PC-3 (cell line): ENCODE measurements at regions of chr1 and their contacts with region 1.

Region 1: DNA sequence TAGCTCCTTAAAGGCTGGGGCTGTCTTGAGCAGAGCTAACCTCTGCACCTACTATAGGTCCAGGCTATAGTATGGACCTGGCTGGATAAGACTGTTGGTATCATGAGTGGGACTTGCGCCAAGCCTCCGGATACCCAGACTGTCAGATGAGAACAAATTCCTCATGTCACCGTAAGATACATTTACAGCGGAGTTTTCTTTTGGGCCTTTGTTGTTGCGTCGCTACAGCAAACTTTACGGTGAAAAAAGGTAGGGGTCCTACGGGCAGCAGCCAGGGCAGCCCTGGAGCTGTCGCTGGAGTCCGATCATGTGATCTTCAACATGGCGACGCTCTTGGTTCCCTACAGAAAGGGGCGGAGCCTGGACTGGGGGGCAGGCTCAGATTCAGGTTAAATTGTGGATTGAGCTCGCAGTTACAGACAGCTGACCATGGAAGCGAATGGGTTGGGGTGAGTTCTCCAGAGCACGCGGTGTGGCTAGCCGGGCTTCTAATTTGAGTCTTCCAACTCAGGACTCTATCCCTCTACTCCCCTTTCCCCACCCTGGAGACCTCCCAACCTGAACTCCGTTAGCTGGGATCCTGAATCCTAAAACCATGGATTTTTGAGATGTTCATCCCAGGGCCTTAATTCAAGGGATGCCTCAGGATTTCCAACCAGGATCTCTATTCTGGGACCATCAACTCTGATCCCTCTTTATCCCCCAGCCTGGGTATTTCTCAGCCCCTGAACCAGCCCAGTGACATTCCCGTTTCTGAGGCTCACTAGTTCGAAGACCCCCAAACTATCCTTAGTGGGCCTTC is at the start of gene UROD:
- DNase-seq: peak; percentile 96
- ATAC-seq: peak; percentile 69
- H3K4me3 ChIP-seq: peak within 1 kb of the TSS; percentile 93
- H3K27ac ChIP-seq: peak within 1 kb of the TSS; percentile 37
- H3K4me1 ChIP-seq: peaks cover 22% of the 10 kb centered on the region
- H3K27me3 ChIP-seq: no peaks in the 10 kb centered on the region
- CTCF ChIP-seq: no peak
- total RNA-seq, gene UROD: 167 and 168 TPM in 2 replicates

Region 2: DNA sequence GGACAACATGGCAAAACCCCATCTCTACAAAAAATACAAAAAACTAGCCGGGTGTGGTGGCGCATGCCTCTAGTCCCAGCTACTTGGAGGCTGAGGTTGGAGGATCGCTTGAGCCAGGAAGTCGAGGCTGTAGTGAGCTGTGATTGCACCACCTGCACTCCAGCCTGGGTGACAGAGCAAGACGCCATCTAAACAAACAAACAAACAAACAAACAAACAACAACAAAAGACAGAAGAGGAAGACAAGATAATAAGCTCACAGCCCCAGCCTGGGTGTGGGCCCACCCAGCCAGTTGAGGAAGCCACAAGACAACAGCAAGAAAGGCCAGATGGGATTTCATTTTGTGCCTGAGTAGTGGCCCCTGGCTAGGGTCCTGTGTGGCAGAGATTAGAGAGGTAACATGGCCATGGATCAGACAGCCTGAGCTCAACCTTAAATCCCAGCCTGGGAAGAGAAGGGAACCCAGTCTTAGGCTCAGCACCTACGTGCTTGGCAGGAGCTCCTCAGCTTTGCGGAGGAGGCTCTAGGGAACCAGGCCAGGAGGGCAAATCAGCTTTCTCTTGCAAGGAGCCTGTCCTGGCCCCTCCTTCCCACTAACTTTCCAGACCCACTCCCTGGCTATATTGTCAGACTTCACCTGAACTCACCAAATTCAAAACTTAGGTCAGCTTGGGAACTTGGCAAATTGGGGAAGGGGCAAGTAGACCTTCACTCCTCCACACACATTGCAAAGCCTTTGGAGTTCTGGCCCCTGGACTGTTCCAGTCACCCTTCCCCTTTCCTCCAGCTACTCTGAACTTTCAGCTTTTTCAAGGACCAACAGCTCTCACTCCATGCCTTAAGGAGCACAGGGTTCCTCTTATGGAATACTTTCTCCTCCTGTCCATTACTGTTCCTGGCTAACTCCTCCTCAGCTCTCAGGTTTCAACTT is 219.0 kb before region 1 on chr1:
- CTCF ChIA-PET with region 1: interaction called, 6 read pairs
- POLR2A ChIA-PET with region 1: no interaction called
- intact Hi-C with region 1: loop called (anchors 5 kb)
- DNase-seq: no peak
- ATAC-seq: no peak
- H3K4me3 ChIP-seq: no peak overlapping the region
- H3K27ac ChIP-seq: no peak overlapping the region
- H3K4me1 ChIP-seq: no peaks in the 10 kb centered on the region
- H3K27me3 ChIP-seq: no peaks in the 10 kb centered on the region
- CTCF ChIP-seq: no peak

Region 3: GRCh38 chr1:44907893-44908292 is 104.1 kb before region 1 on chr1:
- CTCF ChIA-PET with region 1: no interaction called
- POLR2A ChIA-PET with region 1: no interaction called
- intact Hi-C with region 1: loop called (anchors 2 kb)
- DNase-seq: no peak
- ATAC-seq: peak; percentile 22; the same call in 1 of the 2 replicates
- H3K4me3 ChIP-seq: no peak overlapping the region
- H3K27ac ChIP-seq: no peak overlapping the region
- H3K4me1 ChIP-seq: no peaks in the 10 kb centered on the region
- H3K27me3 ChIP-seq: no peaks in the 10 kb centered on the region
- CTCF ChIP-seq: no peak

Region 4: GRCh38 chr1:44985747-44986359 is 26.2 kb before region 1 on chr1:
- CTCF ChIA-PET with region 1: no interaction called
- POLR2A ChIA-PET with region 1: interaction called, 15 read pairs
- intact Hi-C with region 1: loop called (anchors 1 kb)
- DNase-seq: no peak
- ATAC-seq: peak; percentile 19
- H3K4me3 ChIP-seq: peak overlapping the region; percentile 82
- H3K27ac ChIP-seq: 0 out of 2 replicates have a peak overlapping the region, but pooled peaks have one; percentile 5
- H3K4me1 ChIP-seq: peaks cover 3% of the 10 kb centered on the region; the same call in 1 of the 2 replicates
- H3K27me3 ChIP-seq: no peaks in the 10 kb centered on the region
- CTCF ChIP-seq: no peak

Region 5: GRCh38 chr1:45348716-45349677 is 337.0 kb after region 1 on chr1:
- CTCF ChIA-PET with region 1: no interaction called
- POLR2A ChIA-PET with region 1: interaction called, 11 read pairs
- intact Hi-C with region 1: no loop called
- DNase-seq: no peak
- ATAC-seq: no peak
- H3K4me3 ChIP-seq: no peak overlapping the region
- H3K27ac ChIP-seq: no peak overlapping the region
- H3K4me1 ChIP-seq: peaks cover 13% of the 10 kb centered on the region
- H3K27me3 ChIP-seq: no peaks in the 10 kb centered on the region
- CTCF ChIP-seq: no peak

Region 6: GRCh38 chr1:45423906-45424678 is 412.1 kb after region 1 on chr1:
- CTCF ChIA-PET with region 1: no interaction called
- POLR2A ChIA-PET with region 1: no interaction called
- intact Hi-C with region 1: no loop called
- DNase-seq: no peak
- ATAC-seq: no peak
- H3K4me3 ChIP-seq: no peak overlapping the region
- H3K27ac ChIP-seq: no peak overlapping the region
- H3K4me1 ChIP-seq: no peaks in the 10 kb centered on the region
- H3K27me3 ChIP-seq: no peaks in the 10 kb centered on the region
- CTCF ChIP-seq: no peak

Region 7: GRCh38 chr1:45490626-45491486 is 478.8 kb after region 1 on chr1 and contains the start of gene TESK2:
- CTCF ChIA-PET with region 1: interaction called, 5 read pairs
- POLR2A ChIA-PET with region 1: interaction called, 3 read pairs
- intact Hi-C with region 1: loop called (anchors 1 kb)
- DNase-seq: peak; percentile 100
- ATAC-seq: peak; percentile 89
- H3K4me3 ChIP-seq: peak within 1 kb of the TSS; percentile 80
- H3K27ac ChIP-seq: no peak within 1 kb of the TSS
- H3K4me1 ChIP-seq: peaks cover 11% of the 10 kb centered on the region
- H3K27me3 ChIP-seq: no peaks in the 10 kb centered on the region
- CTCF ChIP-seq: no peak
- total RNA-seq, gene TESK2: 6.0 and 6.5 TPM in 2 replicates